ENCODE measurements at regions of chr1 and their contacts with region 1.

Region 1: DNA sequence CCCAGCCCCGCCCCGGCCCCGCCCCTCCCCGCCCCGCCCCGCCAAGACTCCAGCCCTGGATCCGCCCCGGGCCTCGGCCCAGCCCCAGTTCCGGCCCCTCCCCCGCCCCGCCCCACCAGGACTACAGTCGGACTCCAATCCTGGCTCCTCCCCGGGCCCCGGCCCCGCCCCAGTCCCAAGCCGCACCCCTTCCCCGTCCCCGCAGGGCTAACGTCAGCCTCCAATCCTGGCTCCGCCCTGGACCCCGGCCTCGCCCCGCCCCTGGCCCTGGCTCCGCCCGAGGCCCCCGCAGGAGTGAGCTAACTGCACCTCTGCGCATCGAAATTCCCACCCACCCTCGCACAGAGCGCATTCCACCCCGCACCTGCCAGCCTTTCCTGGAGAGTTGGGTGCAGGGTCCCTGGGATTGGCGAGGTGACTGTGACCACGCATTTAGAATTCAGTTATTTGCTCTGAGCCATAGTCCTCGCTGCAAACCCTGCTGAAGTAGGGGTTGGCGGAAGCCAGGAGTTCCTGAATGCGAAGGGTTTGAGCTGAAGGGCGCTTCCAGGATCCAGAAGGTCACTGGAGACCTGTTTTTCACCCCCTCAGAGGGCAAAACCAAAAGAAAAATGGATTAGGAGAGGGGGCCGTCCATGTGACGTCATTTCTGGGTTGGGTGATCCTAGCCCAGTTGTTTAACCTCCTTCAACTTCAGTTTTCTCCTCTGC is 588 bp upstream of the IGSF8 start:
- DNase-seq: peak; percentile 99
- H3K4me3 Mint-ChIP-seq: peak overlapping the region; percentile 75
- H3K27ac Mint-ChIP-seq: peak overlapping the region; percentile 81
- H3K4me1 Mint-ChIP-seq: peaks cover 50% of the 10 kb centered on the region
- H3K27me3 Mint-ChIP-seq: no peaks in the 10 kb centered on the region

Region 2: GRCh38 chr1:159900086-159900680 is 198.8 kb before region 1 on chr1 and contains the start of gene CFAP45:
- CTCF ChIA-PET with region 1: no interaction called
- intact Hi-C with region 1: no loop called
- DNase-seq: no peak
- H3K4me3 Mint-ChIP-seq: no peak within 1 kb of the TSS
- H3K27ac Mint-ChIP-seq: no peak within 1 kb of the TSS
- H3K4me1 Mint-ChIP-seq: no peaks in the 10 kb centered on the region
- H3K27me3 Mint-ChIP-seq: no peaks in the 10 kb centered on the region
- total RNA-seq, gene CFAP45: 2.1 to 2.6 TPM

Region 3: GRCh38 chr1:160031365-160032164 is 67.4 kb before region 1 on chr1 and contains the start of gene PIGM:
- CTCF ChIA-PET with region 1: interaction called, 3 read pairs
- intact Hi-C with region 1: loop called (anchors 1 kb)
- DNase-seq: peak; percentile 98
- H3K4me3 Mint-ChIP-seq: peak within 1 kb of the TSS; percentile 93
- H3K27ac Mint-ChIP-seq: peak within 1 kb of the TSS; percentile 87
- H3K4me1 Mint-ChIP-seq: peaks cover 25% of the 10 kb centered on the region
- H3K27me3 Mint-ChIP-seq: no peaks in the 10 kb centered on the region
- total RNA-seq, gene PIGM: 2.6 TPM

Region 4: GRCh38 chr1:160169553-160170399 is 70.8 kb after region 1 on chr1:
- CTCF ChIA-PET with region 1: interaction called, 4 read pairs
- intact Hi-C with region 1: loop called (anchors 1 kb)
- DNase-seq: peak; percentile 70
- H3K4me3 Mint-ChIP-seq: no peak overlapping the region
- H3K27ac Mint-ChIP-seq: no peak overlapping the region
- H3K4me1 Mint-ChIP-seq: peaks cover 20% of the 10 kb centered on the region
- H3K27me3 Mint-ChIP-seq: peaks cover 2% of the 10 kb centered on the region

Region 5: GRCh38 chr1:160251687-160252526 is 152.9 kb after region 1 on chr1:
- CTCF ChIA-PET with region 1: interaction called, 17 read pairs
- intact Hi-C with region 1: loop called (anchors 1 kb)
- DNase-seq: peak; percentile 73
- H3K4me3 Mint-ChIP-seq: no peak overlapping the region
- H3K27ac Mint-ChIP-seq: no peak overlapping the region
- H3K4me1 Mint-ChIP-seq: peaks cover 22% of the 10 kb centered on the region
- H3K27me3 Mint-ChIP-seq: no peaks in the 10 kb centered on the region

Region 6: DNA sequence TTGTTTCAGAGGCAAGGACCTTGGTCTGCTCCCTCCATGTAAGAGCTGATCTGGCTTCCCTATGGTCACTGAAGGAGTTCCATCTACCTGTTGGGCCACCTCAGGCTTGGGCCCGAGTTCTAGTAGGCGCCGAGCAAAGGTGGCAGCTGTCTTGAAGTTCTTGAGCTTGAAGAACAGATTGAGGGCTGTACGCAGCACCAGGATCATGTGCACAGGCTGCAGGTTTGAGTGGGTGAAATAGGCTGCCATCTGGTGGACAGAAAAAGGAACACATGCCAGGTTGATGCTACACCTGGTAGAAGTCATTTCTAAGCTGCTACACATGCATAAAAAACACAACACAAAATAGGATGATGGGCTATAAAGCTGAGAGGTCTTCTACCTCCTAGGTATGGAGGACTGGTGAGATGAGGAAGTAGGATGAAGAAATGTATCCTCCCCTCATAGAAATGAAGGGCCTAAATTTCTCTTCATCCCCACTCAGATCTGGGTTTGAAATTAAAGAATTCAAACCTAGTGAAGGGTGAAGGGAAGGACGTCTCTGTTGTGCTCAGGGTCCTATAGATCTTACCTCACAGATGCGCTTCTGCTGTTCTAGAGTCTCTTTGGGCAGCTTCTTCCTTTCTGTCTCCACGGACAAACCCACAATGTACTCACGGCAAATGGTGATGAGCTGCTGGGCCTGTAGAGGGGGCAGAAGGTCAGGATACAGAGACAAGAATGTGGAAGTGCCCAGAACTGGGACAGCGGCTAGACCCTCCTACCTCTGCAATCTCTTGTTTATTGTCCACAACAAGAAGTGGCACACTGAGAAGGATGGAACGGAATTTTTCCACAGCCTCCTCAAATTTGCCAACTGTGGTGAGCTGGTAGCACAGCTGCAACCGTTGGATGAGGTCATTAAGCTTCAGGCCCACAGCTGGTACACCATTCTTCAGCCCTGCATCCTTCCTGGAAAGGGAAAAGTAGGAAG is 192.5 kb after region 1 on chr1:
- CTCF ChIA-PET with region 1: interaction called, 87 read pairs
- intact Hi-C with region 1: loop called (anchors 1 kb)
- DNase-seq: peak; percentile 83
- H3K4me3 Mint-ChIP-seq: no peak overlapping the region
- H3K27ac Mint-ChIP-seq: peak overlapping the region; percentile 46
- H3K4me1 Mint-ChIP-seq: peaks cover 4% of the 10 kb centered on the region
- H3K27me3 Mint-ChIP-seq: no peaks in the 10 kb centered on the region

Region 7: GRCh38 chr1:160416369-160416768 is 317.4 kb after region 1 on chr1:
- CTCF ChIA-PET with region 1: interaction called, 3 read pairs
- intact Hi-C with region 1: loop called (anchors 1 kb)
- DNase-seq: no peak
- H3K4me3 Mint-ChIP-seq: no peak overlapping the region
- H3K27ac Mint-ChIP-seq: no peak overlapping the region
- H3K4me1 Mint-ChIP-seq: no peaks in the 10 kb centered on the region
- H3K27me3 Mint-ChIP-seq: no peaks in the 10 kb centered on the region

Measured in activated naive CD4-positive, alpha-beta T cell treated with anti-CD3 and anti-CD28 coated beads for 36 hours (primary cell).